Naive thymus-derived CD4-positive, alpha-beta T cell (primary cell): ENCODE measurements at regions of chr5 and their contacts with region 1.

Region 1: GRCh38 chr5:74851684-74852353 is 14.4 kb downstream of the FAM169A start:
- DNase-seq: no peak
- ATAC-seq: no peak
- H3K4me3 ChIP-seq: no peak overlapping the region
- H3K4me3 Mint-ChIP-seq: peak overlapping the region; percentile 18 to 67 (median 50)
- H3K27ac ChIP-seq: no peak overlapping the region
- H3K27ac Mint-ChIP-seq: peak overlapping the region in 5 of 9 donors; percentile 0 to 89 (median 22)
- H3K4me1 ChIP-seq: peaks cover 0 to 12% of the 10 kb centered on the region in 2 donors
- H3K4me1 Mint-ChIP-seq: peaks cover 19 to 80% (median 67%) of the 10 kb centered on the region in 7 donors
- H3K27me3 ChIP-seq: no peaks in the 10 kb centered on the region
- H3K27me3 Mint-ChIP-seq: no peaks in the 10 kb centered on the region

Region 2: DNA sequence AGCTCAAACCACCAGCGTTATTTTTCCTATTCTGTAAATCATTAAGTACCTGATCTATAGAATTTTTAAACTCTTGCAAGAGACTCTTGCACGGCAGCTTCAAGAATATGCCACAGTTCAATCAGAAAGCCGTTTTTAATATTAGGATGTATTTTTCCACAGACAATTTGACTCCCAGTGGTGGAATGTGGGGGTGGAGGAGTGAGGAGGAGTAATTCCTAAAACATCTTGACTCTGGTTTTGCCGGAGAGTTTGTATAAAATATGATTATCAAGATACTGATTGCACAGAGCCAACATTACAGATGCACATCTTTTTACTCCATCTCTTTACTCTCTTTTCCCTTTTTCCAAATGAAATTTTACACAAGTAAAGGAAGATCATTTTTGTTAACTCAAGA is 499.6 kb before region 1 on chr5:
- CTCF ChIA-PET with region 1: no interaction called
- POLR2A ChIA-PET with region 1: no interaction called
- intact Hi-C with region 1: no loop called
- DNase-seq: no peak
- ATAC-seq: no peak
- H3K4me3 ChIP-seq: no peak overlapping the region
- H3K4me3 Mint-ChIP-seq: no peak overlapping the region
- H3K27ac ChIP-seq: no peak overlapping the region
- H3K27ac Mint-ChIP-seq: no peak overlapping the region
- H3K4me1 ChIP-seq: no peaks in the 10 kb centered on the region
- H3K4me1 Mint-ChIP-seq: no peaks in the 10 kb centered on the region
- H3K27me3 ChIP-seq: no peaks in the 10 kb centered on the region
- H3K27me3 Mint-ChIP-seq: peaks cover 2 to 39% (median 24%) of the 10 kb centered on the region in 5 donors

Region 3: DNA sequence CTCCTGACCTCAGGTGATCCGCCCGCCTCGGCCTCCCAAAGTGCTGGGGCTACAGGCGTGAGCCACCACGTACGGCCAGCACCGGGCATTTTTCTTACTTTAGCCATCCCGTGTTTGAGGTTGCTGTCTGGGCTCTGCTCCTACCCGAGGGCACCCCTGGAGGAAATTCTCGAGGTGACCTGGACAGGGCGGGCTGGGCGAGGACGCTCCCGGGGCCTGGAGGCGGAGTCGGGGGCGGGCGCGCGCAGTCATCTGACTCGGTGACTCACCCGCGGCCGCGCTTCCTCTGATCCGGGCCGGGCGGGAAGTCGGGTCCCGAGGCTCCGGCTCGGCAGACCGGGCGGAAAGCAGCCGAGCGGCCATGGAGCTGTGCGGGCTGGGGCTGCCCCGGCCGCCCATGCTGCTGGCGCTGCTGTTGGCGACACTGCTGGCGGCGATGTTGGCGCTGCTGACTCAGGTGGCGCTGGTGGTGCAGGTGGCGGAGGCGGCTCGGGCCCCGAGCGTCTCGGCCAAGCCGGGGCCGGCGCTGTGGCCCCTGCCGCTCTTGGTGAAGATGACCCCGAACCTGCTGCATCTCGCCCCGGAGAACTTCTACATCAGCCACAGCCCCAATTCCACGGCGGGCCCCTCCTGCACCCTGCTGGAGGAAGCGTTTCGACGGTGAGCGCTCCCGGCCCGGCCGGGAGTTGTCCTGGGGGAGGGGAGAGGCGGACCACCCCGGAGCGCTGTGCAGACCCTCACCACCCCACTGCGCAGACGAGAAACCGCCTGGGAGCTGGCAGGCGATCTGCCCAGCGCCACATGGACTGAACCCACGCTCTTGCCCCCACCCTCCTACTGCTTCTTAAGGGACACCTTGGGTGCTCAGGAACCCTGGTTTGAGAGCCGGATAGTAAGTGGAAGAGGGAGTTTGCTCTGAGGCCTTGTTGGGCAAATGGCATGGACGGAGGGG is 166.6 kb before region 1 on chr5 and contains the start of gene HEXB:
- CTCF ChIA-PET with region 1: no interaction called
- POLR2A ChIA-PET with region 1: no interaction called
- intact Hi-C with region 1: loop called in 1 of 2 experiments (anchors 5 kb)
- DNase-seq: peak; percentile 55 to 89 (median 69)
- ATAC-seq: peak; percentile 91
- H3K4me3 ChIP-seq: peak within 1 kb of the TSS; percentile 86
- H3K4me3 Mint-ChIP-seq: peak within 1 kb of the TSS; percentile 76 to 92 (median 86)
- H3K27ac ChIP-seq: peak within 1 kb of the TSS; percentile 78
- H3K27ac Mint-ChIP-seq: peak within 1 kb of the TSS; percentile 76 to 92 (median 86)
- H3K4me1 ChIP-seq: peaks cover 7 to 13% of the 10 kb centered on the region in 2 donors
- H3K4me1 Mint-ChIP-seq: peaks cover 16 to 34% (median 30%) of the 10 kb centered on the region in 7 donors
- H3K27me3 ChIP-seq: no peaks in the 10 kb centered on the region
- H3K27me3 Mint-ChIP-seq: peaks cover 0 to 17% (median 0%) of the 10 kb centered on the region in 5 donors
- total RNA-seq, gene HEXB: 37.7 to 88.9 (median 64.2) TPM

Region 4: DNA sequence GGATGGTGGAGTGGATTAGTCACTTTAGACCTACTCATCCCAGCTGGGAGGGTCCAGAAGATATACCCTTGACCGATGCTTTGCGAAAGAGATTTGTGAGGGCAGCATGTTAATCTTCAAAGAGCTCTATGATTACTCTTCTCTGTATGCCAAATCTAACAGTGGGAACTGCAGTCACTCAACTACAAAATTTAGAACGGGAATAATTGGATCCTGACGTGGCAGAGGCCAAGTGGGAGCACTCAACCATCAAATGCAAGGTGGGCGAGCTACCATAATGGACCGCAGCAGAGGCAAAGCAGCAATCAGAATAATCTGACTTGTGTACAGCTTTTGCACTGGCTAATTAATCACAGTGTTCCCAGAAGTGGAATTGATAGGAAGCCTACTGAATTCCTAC is 64.4 kb before region 1 on chr5:
- CTCF ChIA-PET with region 1: no interaction called
- POLR2A ChIA-PET with region 1: no interaction called
- intact Hi-C with region 1: no loop called
- DNase-seq: no peak
- ATAC-seq: no peak
- H3K4me3 ChIP-seq: no peak overlapping the region
- H3K4me3 Mint-ChIP-seq: no peak overlapping the region
- H3K27ac ChIP-seq: no peak overlapping the region
- H3K27ac Mint-ChIP-seq: peak overlapping the region in 3 of 9 donors; percentile 22 to 36 (median 32)
- H3K4me1 ChIP-seq: no peaks in the 10 kb centered on the region
- H3K4me1 Mint-ChIP-seq: no peaks in the 10 kb centered on the region
- H3K27me3 ChIP-seq: no peaks in the 10 kb centered on the region
- H3K27me3 Mint-ChIP-seq: no peaks in the 10 kb centered on the region